ENCODE measurements at regions of chr10 and their contacts with region 1.

Region 1: GRCh38 chr10:102917962-102918816 is at the start of gene CNNM2:
- DNase-seq: peak; percentile 99 to 100 (median 99)
- H3K4me3 ChIP-seq: peak within 1 kb of the TSS; percentile 96
- H3K4me3 Mint-ChIP-seq: peak within 1 kb of the TSS; percentile 93 to 96 (median 95)
- H3K27ac ChIP-seq: peak within 1 kb of the TSS; percentile 84
- H3K27ac Mint-ChIP-seq: peak within 1 kb of the TSS; percentile 86 to 97 (median 94)
- H3K4me1 ChIP-seq: peaks cover 38% of the 10 kb centered on the region
- H3K4me1 Mint-ChIP-seq: peaks cover 47 to 59% (median 59%) of the 10 kb centered on the region in 3 donors
- H3K27me3 ChIP-seq: no peaks in the 10 kb centered on the region
- H3K27me3 Mint-ChIP-seq: peaks cover 5 to 16% of the 10 kb centered on the region in 2 donors
- total RNA-seq, gene CNNM2: 6.1 to 6.2 TPM

Region 2: DNA sequence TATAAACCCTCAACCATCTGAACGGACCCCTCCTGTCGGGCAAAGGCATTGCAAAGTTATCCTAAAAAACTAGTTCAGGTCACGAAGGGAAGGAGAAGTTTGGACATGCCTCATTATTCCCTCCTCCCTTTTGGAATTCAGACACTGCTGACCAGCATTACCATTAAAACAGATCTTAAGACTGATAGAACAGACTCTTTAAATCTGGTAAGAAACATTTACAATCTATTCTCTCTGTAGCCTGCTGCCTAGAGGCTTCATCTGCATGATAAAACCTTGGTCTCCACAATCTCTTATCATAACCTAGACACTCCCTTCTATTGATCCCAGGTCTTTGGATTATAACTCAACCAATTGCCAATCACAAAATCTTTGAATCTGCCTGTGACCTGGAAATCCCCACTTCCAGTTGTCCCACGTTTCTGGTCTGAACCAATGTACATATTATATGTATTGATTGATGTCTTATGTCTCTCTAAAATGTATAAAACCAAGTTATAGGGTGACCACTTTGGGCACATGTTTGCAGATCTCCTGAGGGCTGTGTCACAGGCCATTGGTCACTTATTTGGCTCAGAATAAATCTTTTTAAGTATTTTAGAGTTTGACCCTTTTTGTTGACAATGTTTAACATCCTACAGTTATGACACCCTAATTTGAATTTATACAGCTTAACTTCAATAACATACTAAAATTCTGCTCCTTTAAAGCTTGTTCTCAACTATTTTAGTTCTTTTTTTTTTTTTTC is 23.5 kb before region 1 on chr10:
- CTCF ChIA-PET with region 1: no interaction called
- POLR2A ChIA-PET with region 1: no interaction called
- DNase-seq: no peak
- H3K4me3 ChIP-seq: no peak overlapping the region
- H3K4me3 Mint-ChIP-seq: no peak overlapping the region
- H3K27ac ChIP-seq: no peak overlapping the region
- H3K27ac Mint-ChIP-seq: no peak overlapping the region
- H3K4me1 ChIP-seq: no peaks in the 10 kb centered on the region
- H3K4me1 Mint-ChIP-seq: no peaks in the 10 kb centered on the region
- H3K27me3 ChIP-seq: no peaks in the 10 kb centered on the region
- H3K27me3 Mint-ChIP-seq: no peaks in the 10 kb centered on the region

Region 3: GRCh38 chr10:103053659-103054581 is 135.7 kb after region 1 on chr10:
- CTCF ChIA-PET with region 1: interaction called, 13 read pairs
- POLR2A ChIA-PET with region 1: interaction called, 3 read pairs
- DNase-seq: peak; percentile 42 to 86 (median 72)
- H3K4me3 ChIP-seq: peak overlapping the region; percentile 61
- H3K4me3 Mint-ChIP-seq: peak overlapping the region; percentile 83 to 94 (median 89)
- H3K27ac ChIP-seq: peak overlapping the region; percentile 71
- H3K27ac Mint-ChIP-seq: peak overlapping the region; percentile 77 to 98 (median 94)
- H3K4me1 ChIP-seq: peaks cover 13% of the 10 kb centered on the region
- H3K4me1 Mint-ChIP-seq: peaks cover 20 to 23% (median 22%) of the 10 kb centered on the region in 3 donors
- H3K27me3 ChIP-seq: no peaks in the 10 kb centered on the region
- H3K27me3 Mint-ChIP-seq: no peaks in the 10 kb centered on the region

Region 4: GRCh38 chr10:103062604-103063590 is 144.7 kb after region 1 on chr10:
- CTCF ChIA-PET with region 1: interaction called, 77 read pairs
- POLR2A ChIA-PET with region 1: interaction called, 3 read pairs
- DNase-seq: no peak
- H3K4me3 ChIP-seq: no peak overlapping the region
- H3K4me3 Mint-ChIP-seq: no peak overlapping the region
- H3K27ac ChIP-seq: no peak overlapping the region
- H3K27ac Mint-ChIP-seq: peak overlapping the region in 1 of 8 donors; percentile 41
- H3K4me1 ChIP-seq: no peaks in the 10 kb centered on the region
- H3K4me1 Mint-ChIP-seq: no peaks in the 10 kb centered on the region
- H3K27me3 ChIP-seq: no peaks in the 10 kb centered on the region
- H3K27me3 Mint-ChIP-seq: no peaks in the 10 kb centered on the region

Region 5: GRCh38 chr10:103069453-103070331 is 151.5 kb after region 1 on chr10:
- CTCF ChIA-PET with region 1: interaction called, 77 read pairs
- POLR2A ChIA-PET with region 1: interaction called, 6 read pairs
- DNase-seq: peak; percentile 50 to 83 (median 63)
- H3K4me3 ChIP-seq: no peak overlapping the region
- H3K4me3 Mint-ChIP-seq: peak overlapping the region in 3 of 7 donors; percentile 4 to 55 (median 13)
- H3K27ac ChIP-seq: no peak overlapping the region
- H3K27ac Mint-ChIP-seq: peak overlapping the region in 7 of 8 donors; percentile 45 to 93 (median 68)
- H3K4me1 ChIP-seq: peaks cover 18% of the 10 kb centered on the region
- H3K4me1 Mint-ChIP-seq: peaks cover 24 to 28% (median 27%) of the 10 kb centered on the region in 3 donors
- H3K27me3 ChIP-seq: no peaks in the 10 kb centered on the region
- H3K27me3 Mint-ChIP-seq: no peaks in the 10 kb centered on the region

Region 6: DNA sequence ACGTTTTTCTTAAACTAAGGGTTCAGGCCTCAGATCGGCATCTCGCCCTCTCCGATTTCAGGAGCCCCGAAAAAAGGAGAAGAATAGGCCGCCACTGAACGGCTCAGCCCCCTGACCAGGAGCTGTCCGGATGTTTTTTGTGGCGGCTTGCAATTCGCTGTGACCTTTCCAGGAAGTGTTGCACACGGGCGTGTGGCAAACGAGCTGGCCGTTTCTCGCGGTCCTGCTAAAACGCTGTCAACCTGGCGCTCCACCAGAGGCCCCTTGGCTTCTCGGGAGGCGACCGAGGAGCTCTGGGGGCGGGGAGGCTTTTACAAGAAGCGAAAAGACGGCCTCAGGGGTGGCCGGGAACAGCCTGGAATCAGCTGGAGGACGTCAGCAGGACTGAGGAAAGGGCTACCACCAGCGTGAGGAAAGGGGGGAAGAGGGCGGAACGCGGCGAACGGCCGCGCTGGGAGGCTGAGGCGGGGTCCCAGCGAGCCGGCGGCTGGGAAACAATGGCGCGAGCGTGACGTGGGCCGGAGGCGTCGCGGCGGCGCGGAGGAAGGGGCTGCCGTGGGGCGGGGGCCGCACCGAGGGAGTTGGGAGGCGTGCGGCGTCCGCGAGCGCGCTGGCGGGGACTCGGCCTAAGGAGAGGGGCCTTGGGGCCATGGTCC is 274.4 kb after region 1 on chr10:
- CTCF ChIA-PET with region 1: interaction called, 3 read pairs
- POLR2A ChIA-PET with region 1: interaction called, 12 read pairs
- DNase-seq: peak; percentile 32 to 69 (median 49)
- H3K4me3 ChIP-seq: peak overlapping the region; percentile 97
- H3K4me3 Mint-ChIP-seq: peak overlapping the region; percentile 96 to 99 (median 98)
- H3K27ac ChIP-seq: peak overlapping the region; percentile 86
- H3K27ac Mint-ChIP-seq: peak overlapping the region; percentile 83 to 100 (median 95)
- H3K4me1 ChIP-seq: peaks cover 26% of the 10 kb centered on the region
- H3K4me1 Mint-ChIP-seq: peaks cover 37 to 52% (median 47%) of the 10 kb centered on the region in 3 donors
- H3K27me3 ChIP-seq: no peaks in the 10 kb centered on the region
- H3K27me3 Mint-ChIP-seq: no peaks in the 10 kb centered on the region

Region 7: DNA sequence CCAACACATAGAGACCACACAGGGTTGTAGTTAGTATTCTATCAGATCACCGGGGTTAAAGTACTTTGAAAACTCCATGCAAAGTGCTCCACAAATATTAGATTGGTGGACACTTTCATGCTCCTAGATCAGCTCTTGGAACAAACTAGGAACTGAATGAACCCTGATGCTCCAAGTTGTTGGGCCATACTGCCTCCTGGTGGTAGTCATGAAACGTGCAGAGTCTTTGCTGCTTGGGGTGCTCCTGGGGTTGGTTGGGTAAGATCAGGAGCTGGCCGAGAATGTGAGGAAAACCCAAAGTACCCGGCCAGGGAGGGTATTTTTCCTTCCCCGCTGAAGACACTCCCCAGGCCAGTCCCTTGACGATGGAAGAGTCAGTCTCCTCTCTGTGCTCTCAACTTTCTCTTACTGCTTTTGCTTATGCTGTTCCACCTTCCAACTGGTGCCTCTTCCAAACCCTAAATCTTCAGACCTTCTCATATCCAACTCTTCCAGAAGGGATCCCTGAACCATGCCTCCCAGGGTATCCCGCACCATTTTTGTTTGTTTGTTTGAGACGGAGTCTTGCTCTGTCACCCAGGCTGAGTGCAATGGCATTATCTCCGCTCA is 326.6 kb after region 1 on chr10:
- CTCF ChIA-PET with region 1: interaction called, 21 read pairs
- POLR2A ChIA-PET with region 1: interaction called, 5 read pairs
- DNase-seq: peak; percentile 33 to 74 (median 44)
- H3K4me3 ChIP-seq: no peak overlapping the region
- H3K4me3 Mint-ChIP-seq: peak overlapping the region in 1 of 7 donors; percentile 38
- H3K27ac ChIP-seq: no peak overlapping the region
- H3K27ac Mint-ChIP-seq: no peak overlapping the region
- H3K4me1 ChIP-seq: no peaks in the 10 kb centered on the region
- H3K4me1 Mint-ChIP-seq: peaks cover 5 to 13% (median 7%) of the 10 kb centered on the region in 3 donors
- H3K27me3 ChIP-seq: no peaks in the 10 kb centered on the region
- H3K27me3 Mint-ChIP-seq: peaks cover 7 to 20% of the 10 kb centered on the region in 2 donors

Measured in CD8-positive, alpha-beta memory T cell (primary cell).